A673 (cell line): ENCODE measurements at regions of chr1 and their contacts with region 1.

Region 1: GRCh38 chr1:234326497-234327366 is 46.5 kb upstream of the COA6 start:
- DNase-seq: peak; percentile 85
- H3K4me3 ChIP-seq: no peak overlapping the region
- H3K27ac ChIP-seq: no peak overlapping the region
- H3K4me1 ChIP-seq: peaks cover 5% of the 10 kb centered on the region
- H3K27me3 ChIP-seq: no peaks in the 10 kb centered on the region
- CTCF ChIP-seq: peak; percentile 90

Region 2: GRCh38 chr1:234125283-234125682 is 201.4 kb before region 1 on chr1:
- CTCF ChIA-PET with region 1: no interaction called
- POLR2A ChIA-PET with region 1: no interaction called
- intact Hi-C with region 1: loop called (anchors 5 kb)
- DNase-seq: peak; percentile 67
- H3K4me3 ChIP-seq: no peak overlapping the region
- H3K27ac ChIP-seq: no peak overlapping the region
- H3K4me1 ChIP-seq: no peaks in the 10 kb centered on the region
- H3K27me3 ChIP-seq: no peaks in the 10 kb centered on the region
- CTCF ChIP-seq: peak; percentile 64

Region 3: GRCh38 chr1:234154320-234155251 is 172.1 kb before region 1 on chr1:
- CTCF ChIA-PET with region 1: no interaction called
- POLR2A ChIA-PET with region 1: no interaction called
- intact Hi-C with region 1: loop called (anchors 2 kb)
- DNase-seq: peak; percentile 90
- H3K4me3 ChIP-seq: no peak overlapping the region
- H3K27ac ChIP-seq: no peak overlapping the region
- H3K4me1 ChIP-seq: no peaks in the 10 kb centered on the region
- H3K27me3 ChIP-seq: no peaks in the 10 kb centered on the region
- CTCF ChIP-seq: peak; percentile 76